ENCODE measurements at regions of chr11 and their contacts with region 1.

Region 1: DNA sequence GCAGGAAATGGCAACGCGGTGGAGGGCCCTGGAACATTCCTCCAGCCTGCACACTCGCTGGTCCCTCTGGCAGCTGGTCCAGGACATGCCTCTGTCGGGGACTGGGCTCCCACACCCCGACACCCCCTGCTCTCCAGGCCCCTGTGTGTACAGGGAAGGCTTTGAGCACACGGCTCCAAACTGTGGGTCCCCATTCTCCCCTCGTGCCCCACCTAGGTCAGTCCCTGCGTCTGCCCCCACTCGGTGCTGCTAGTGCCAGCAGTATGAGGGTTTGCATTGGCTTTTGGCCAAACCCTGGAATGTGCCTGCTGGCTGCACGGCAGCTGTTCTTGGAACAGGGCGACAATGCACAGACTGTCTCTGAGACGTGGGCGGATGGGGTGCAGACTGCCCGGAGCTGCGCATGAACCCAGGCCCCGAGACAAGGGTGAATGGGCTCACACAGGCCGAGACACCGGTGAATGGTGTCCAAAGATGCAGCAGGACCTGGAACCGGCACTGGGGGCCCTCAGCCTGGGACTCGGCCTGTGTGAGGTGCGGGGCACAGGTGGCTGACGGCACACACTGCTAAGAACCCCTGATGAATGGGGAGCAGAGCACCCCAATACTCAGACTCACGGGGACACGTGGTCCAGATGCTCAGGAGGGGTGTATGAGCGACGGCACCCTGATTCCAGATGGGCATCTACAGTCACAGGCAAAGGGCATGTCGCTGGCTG is 7.5 kb upstream of the SYT8 start:
- DNase-seq: peak in 4 of 5 donors; percentile 72 to 82 (median 73)
- ATAC-seq: peak; percentile 63 to 81 (median 76)
- H3K4me3 ChIP-seq: no peak overlapping the region
- H3K27ac ChIP-seq: peak overlapping the region in 6 of 12 donors; percentile 20 to 60 (median 38)
- H3K4me1 ChIP-seq: peaks cover 0 to 18% (median 12%) of the 10 kb centered on the region in 12 donors
- H3K27me3 ChIP-seq: peaks cover 0 to 17% (median 0%) of the 10 kb centered on the region in 9 donors
- CTCF ChIP-seq: no peak
- POLR2A ChIP-seq: no peak

Region 2: DNA sequence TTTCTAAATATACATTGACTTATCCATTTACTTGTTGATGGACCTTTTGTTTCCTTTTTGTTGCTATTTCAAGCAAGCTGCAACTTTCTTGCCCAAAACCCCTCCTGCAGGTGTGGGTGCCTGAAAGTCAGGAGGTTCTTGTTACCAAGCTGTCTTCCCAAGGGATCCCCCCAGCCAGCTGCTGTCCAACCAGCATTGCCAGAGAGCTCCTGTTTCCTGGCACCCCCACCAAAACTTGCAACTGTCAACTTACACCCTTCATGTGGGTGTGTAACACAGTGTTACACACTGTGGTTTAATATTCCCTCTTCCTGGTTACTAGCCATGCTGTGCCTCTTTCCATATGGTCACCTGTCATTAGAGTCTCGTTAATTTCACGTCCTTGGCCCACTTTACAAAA is 240.6 kb before region 1 on chr11:
- intact Hi-C with region 1: no loop called
- DNase-seq: no peak
- ATAC-seq: no peak
- H3K4me3 ChIP-seq: no peak overlapping the region
- H3K27ac ChIP-seq: no peak overlapping the region
- H3K4me1 ChIP-seq: peaks cover 0 to 7% (median 0%) of the 10 kb centered on the region in 12 donors
- H3K27me3 ChIP-seq: no peaks in the 10 kb centered on the region
- CTCF ChIP-seq: no peak
- POLR2A ChIP-seq: no peak

Region 3: GRCh38 chr11:1763796-1764661 is 63.2 kb before region 1 on chr11 and contains the start of gene CTSD:
- intact Hi-C with region 1: loop called in 1 of 10 experiments (anchors 5 kb)
- DNase-seq: peak; percentile 91 to 97 (median 93)
- ATAC-seq: peak; percentile 51 to 84 (median 68)
- H3K4me3 ChIP-seq: peak within 1 kb of the TSS; percentile 80 to 100 (median 95)
- H3K27ac ChIP-seq: peak within 1 kb of the TSS; percentile 88 to 99 (median 98)
- H3K4me1 ChIP-seq: peaks cover 5 to 51% (median 48%) of the 10 kb centered on the region in 12 donors
- H3K27me3 ChIP-seq: no peaks in the 10 kb centered on the region
- CTCF ChIP-seq: peak in 3 of 12 donors; percentile 7 to 19 (median 10)
- POLR2A ChIP-seq: peak; percentile 12 to 83
- total RNA-seq, gene CTSD: 580 to 1,779 (median 722) TPM

Region 4: DNA sequence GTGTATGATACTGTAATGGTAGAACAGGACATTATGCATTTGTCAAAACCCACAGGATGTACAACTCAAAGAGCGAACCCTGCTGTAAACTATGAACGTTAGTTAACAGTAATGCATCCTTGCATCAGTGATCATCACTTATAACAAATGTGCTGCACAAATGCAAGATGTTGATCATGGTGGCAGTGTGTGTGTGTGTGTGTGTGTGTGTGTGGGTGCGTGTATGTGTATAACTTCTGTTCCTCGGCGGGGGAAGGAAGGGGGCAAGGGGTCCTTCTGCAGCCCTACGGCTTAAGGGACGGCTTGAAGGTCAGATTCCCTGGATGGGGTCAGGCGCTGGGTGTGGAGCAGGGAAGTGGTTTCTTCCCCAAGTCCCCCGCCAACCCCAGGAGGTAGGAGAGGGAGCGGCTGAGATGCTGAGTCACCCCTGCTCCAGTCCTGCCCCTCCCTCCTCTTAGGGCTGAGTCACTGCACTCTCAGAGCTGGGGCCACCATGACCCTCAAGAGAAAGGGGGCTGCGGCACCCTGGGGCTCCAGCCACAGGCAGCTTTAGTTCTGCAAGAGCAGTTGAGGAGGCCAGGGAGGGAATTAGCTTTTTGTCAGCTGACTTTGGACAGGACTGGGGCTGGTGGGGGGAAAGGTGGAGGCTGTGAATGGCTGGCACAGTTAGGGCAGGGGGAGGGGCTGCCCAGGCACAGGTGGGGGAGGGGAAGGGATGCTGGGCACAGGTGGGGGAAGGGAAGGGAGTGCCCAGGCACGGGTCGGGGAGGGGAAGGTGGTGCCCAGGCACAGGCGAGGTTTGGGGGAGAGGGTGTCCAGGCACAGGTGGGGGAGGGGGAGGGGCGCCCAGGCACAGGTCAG is 54.8 kb before region 1 on chr11:
- intact Hi-C with region 1: loop called in 1 of 10 experiments (anchors 10 kb)
- DNase-seq: peak in 2 of 5 donors; percentile 76
- ATAC-seq: peak; percentile 64 to 90 (median 83)
- H3K4me3 ChIP-seq: no peak overlapping the region
- H3K27ac ChIP-seq: peak overlapping the region in 1 of 12 donors; percentile 78
- H3K4me1 ChIP-seq: peaks cover 0 to 26% (median 0%) of the 10 kb centered on the region in 12 donors
- H3K27me3 ChIP-seq: no peaks in the 10 kb centered on the region
- CTCF ChIP-seq: no peak
- POLR2A ChIP-seq: no peak

Measured in heart left ventricle (tissue), 16 donors.